ENCODE measurements at regions of chr12 and their contacts with region 1.

Region 1: GRCh38 chr12:12008931-12009611 is 61.7 kb upstream of the BCL2L14 start:
- DNase-seq: peak; percentile 84
- ATAC-seq: peak; percentile 64
- H3K4me3 Mint-ChIP-seq: peak overlapping the region; percentile 71
- H3K27ac Mint-ChIP-seq: peak overlapping the region; percentile 96
- H3K4me1 Mint-ChIP-seq: peaks cover 77% of the 10 kb centered on the region
- H3K27me3 Mint-ChIP-seq: no peaks in the 10 kb centered on the region

Region 2: DNA sequence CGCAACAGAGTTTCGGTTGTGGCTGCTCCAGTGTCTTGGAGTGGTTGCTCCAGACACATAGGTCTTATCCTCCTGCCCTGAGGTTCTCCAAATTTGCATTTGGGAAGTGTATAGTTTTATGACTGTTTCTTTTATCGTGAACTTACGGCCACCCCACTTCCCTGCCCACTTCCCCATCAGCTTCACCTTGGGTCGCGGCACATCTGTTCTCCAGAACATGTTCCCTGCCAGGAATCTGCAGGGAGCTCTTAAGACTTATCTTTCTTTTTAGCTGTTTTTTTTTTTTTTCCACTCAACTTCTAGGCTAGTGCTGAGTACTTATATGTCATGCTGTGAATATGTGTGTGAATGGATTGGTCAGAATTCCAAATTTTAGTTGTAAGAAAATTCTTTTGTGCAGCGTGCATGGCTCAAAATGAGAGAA is 284.2 kb before region 1 on chr12:
- CTCF ChIA-PET with region 1: interaction called, 4 read pairs
- POLR2A ChIA-PET with region 1: interaction called, 4 read pairs
- intact Hi-C with region 1: loop called in 1 of 2 experiments (anchors 1 kb)
- DNase-seq: no peak
- ATAC-seq: no peak
- H3K4me3 Mint-ChIP-seq: no peak overlapping the region
- H3K27ac Mint-ChIP-seq: no peak overlapping the region
- H3K4me1 Mint-ChIP-seq: peaks cover 60% of the 10 kb centered on the region
- H3K27me3 Mint-ChIP-seq: no peaks in the 10 kb centered on the region

Region 3: DNA sequence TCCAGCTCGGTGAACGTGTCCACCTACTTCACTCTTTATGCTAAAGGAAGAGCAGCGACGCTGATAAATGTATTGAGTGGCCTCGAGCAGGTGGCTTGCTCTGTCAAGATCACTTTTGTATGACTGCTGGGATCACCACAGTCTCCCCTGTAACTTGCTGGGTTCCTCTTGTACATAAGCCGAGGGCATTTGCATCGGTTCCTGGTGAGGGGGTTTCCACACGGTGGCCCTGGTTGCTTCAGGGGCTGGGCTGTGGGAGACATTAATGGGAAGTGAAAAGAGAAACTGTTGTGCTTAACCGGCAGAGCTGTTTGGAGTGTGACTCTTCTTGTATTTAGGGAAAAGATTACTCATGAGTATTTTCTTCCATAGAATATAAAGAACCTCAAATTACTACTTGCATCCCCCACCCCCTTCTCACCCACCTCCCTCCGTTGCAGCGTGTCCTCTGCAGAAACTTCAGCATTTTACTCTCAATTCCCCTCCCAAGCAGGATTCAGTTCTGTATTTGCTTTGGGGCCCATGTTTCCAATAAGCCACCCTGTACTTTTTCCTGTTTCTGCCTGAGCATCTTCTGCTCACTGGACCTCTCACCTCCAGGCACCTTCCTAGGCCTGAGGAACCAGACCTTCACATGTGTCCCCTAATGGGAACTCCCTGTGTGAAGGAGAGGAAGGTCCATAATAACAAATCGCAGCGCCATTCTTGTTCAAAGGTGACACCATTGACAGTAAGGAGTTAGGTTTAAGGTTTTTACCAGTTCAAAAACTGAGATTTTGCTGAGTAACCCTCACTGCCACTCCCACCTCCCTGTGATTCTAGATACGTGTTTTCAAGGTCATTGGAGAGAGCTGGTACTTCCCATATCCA is 172.6 kb before region 1 on chr12:
- CTCF ChIA-PET with region 1: interaction called, 5 read pairs
- POLR2A ChIA-PET with region 1: interaction called, 15 read pairs
- intact Hi-C with region 1: loop called (anchors 1 kb)
- DNase-seq: peak; percentile 88
- ATAC-seq: peak; percentile 86
- H3K4me3 Mint-ChIP-seq: peak overlapping the region; percentile 45
- H3K27ac Mint-ChIP-seq: peak overlapping the region; percentile 95
- H3K4me1 Mint-ChIP-seq: peaks cover 77% of the 10 kb centered on the region
- H3K27me3 Mint-ChIP-seq: no peaks in the 10 kb centered on the region

Region 4: GRCh38 chr12:11981121-11981733 is 27.8 kb before region 1 on chr12:
- CTCF ChIA-PET with region 1: interaction called, 14 read pairs
- POLR2A ChIA-PET with region 1: interaction called, 37 read pairs
- intact Hi-C with region 1: loop called (anchors 1 kb)
- DNase-seq: peak; percentile 70
- ATAC-seq: peak; percentile 87
- H3K4me3 Mint-ChIP-seq: peak overlapping the region; percentile 26
- H3K27ac Mint-ChIP-seq: peak overlapping the region; percentile 99
- H3K4me1 Mint-ChIP-seq: peaks cover 58% of the 10 kb centered on the region
- H3K27me3 Mint-ChIP-seq: no peaks in the 10 kb centered on the region

Region 5: DNA sequence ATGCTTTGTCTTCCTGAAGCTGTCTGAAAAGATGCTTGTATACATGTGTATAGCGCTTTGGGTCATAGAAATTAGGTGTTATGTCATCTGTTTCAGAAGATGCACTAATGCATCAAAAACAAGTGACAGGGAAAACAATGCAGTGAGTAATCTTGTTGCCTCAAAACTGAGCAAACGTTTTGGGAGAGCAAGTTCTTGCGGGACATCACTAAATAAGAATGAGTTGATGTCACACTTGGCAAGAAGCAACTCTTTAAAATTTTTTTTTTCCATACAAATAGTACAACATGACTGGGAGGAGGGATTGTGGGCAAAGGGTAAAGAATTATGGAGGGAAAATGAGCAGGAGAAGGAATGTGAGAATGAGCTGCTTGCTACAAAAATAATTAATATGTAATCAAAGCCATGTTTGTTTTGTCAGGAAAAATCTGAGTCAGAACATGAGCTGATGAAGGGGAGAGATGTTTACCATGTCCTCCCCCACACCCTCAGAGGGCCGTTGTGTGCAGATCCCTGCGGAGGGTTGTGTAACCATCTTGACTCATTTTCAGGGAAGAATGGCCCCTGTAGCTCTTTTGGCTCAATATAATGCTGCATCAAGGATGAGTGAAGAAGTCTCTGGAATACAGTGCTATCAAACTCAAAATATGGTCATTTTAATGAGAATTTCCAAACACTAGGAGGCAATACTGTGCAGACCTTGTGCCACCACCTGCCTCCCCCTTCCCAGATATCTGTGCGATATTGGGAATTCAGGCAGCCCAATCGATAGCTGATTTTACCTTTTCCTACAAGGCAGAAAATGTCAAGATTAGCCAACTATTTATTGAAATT is 389.2 kb after region 1 on chr12:
- CTCF ChIA-PET with region 1: no interaction called
- POLR2A ChIA-PET with region 1: no interaction called
- intact Hi-C with region 1: no loop called
- DNase-seq: no peak
- ATAC-seq: no peak
- H3K4me3 Mint-ChIP-seq: no peak overlapping the region
- H3K27ac Mint-ChIP-seq: no peak overlapping the region
- H3K4me1 Mint-ChIP-seq: peaks cover 37% of the 10 kb centered on the region
- H3K27me3 Mint-ChIP-seq: no peaks in the 10 kb centered on the region

Region 6: DNA sequence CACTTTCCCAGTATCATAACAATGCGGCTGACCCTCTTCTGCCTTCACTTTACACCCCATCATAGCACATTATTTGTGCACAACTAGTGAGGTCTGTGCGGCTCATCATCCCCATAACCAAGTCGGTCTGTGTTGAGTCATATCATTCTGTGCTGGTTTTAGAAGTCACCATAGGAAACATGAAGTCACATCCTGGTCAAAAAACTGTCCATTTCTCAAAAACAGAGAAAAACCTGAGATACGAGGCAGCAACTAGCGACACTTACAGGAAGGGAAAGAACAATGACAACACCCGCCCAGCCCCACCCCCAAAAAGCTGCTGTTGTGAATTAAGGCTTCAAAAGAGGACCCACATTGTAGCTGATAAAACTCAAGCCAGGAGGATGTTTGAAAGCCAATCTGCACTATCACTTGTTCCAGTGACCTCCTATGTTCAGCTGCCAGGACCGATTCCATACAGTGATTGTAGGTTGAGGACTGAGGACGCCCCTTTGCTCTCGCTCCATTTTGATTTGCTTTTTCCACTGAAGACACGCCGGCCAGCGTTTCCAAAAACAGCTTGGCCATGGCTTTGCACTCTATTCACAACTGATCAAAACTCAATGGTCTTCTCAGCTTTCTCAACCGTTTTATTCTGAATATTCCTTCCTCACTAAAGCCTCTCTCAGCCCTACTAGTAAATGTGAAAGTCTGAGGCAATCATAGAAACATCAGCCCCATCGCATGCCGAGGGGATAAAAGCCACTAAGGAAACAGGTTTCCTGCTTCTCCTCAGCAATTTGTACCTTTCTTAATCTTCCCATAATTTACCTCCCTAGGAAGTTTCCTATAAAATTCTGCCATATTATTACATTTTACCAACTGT is 466.1 kb after region 1 on chr12:
- CTCF ChIA-PET with region 1: interaction called, 3 read pairs
- POLR2A ChIA-PET with region 1: interaction called, 4 read pairs
- intact Hi-C with region 1: loop called in 1 of 2 experiments (anchors 1 kb)
- DNase-seq: peak; percentile 78
- ATAC-seq: peak; percentile 87
- H3K4me3 Mint-ChIP-seq: peak overlapping the region; percentile 59
- H3K27ac Mint-ChIP-seq: peak overlapping the region; percentile 97
- H3K4me1 Mint-ChIP-seq: peaks cover 81% of the 10 kb centered on the region
- H3K27me3 Mint-ChIP-seq: no peaks in the 10 kb centered on the region

Region 7: GRCh38 chr12:12716793-12717585 is 707.9 kb after region 1 on chr12 and contains the start of gene CDKN1B:
- CTCF ChIA-PET with region 1: interaction called, 3 read pairs
- POLR2A ChIA-PET with region 1: no interaction called
- intact Hi-C with region 1: loop called in 1 of 2 experiments (anchors 5 kb)
- DNase-seq: peak; percentile 93
- ATAC-seq: peak; percentile 69
- H3K4me3 Mint-ChIP-seq: peak within 1 kb of the TSS; percentile 93
- H3K27ac Mint-ChIP-seq: peak within 1 kb of the TSS; percentile 98
- H3K4me1 Mint-ChIP-seq: peaks cover 53% of the 10 kb centered on the region
- H3K27me3 Mint-ChIP-seq: no peaks in the 10 kb centered on the region
- total RNA-seq, gene CDKN1B: 34.2 to 37.0 TPM